ENCODE measurements at regions of chr4 and their contacts with region 1.

Region 1: DNA sequence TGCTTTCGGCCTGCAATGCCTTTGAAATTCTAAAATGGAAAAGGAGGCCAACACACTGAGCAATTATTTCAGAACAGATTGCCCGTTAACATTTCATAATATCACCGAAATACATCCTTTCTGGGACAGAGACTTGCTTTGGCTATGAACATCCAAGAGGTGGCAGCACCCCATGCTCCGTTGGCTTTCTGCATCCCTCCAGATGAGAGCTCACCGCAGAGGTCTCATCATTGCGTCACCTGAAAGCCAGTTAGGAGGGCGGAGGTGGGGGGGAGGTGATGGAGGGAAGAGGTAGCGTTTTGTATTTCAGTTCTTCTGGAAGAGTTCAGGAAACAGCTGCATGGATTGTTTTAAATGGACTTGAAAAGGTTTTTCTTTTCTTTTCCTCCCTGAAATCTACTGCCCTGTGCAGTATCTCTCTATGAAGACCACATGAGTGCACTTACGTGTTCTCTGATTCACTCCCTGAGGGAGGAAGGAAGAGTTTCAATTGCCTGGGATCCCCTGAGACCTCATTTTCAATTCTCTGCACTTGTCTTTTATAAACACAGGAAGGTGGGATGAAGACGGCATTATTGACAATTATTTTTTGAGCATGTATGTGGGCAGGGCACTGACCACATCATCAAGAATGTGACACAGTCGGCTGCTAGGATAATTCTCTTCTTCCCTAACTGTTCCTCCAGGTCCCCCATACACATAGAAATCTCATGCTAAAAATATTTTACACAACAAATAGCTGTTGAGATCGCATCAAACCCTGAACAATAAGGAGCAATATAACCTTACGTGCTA is 166.9 kb upstream of the PGRMC2 start:
- DNase-seq: peak; percentile 51
- ATAC-seq: peak; percentile 95
- H3K4me3 ChIP-seq: no peak overlapping the region
- H3K27ac ChIP-seq: no peak overlapping the region
- H3K4me1 ChIP-seq: 0 out of 2 replicates have a peak, but pooled peaks cover 3% of the 10 kb centered on the region
- H3K27me3 ChIP-seq: no peaks in the 10 kb centered on the region
- CTCF ChIP-seq: peak; percentile 84 to 90 (median 86)
- EP300 ChIP-seq: no peak
- POLR2A ChIP-seq: no peak
- RAD21 ChIP-seq: peak; percentile 93

Region 2: DNA sequence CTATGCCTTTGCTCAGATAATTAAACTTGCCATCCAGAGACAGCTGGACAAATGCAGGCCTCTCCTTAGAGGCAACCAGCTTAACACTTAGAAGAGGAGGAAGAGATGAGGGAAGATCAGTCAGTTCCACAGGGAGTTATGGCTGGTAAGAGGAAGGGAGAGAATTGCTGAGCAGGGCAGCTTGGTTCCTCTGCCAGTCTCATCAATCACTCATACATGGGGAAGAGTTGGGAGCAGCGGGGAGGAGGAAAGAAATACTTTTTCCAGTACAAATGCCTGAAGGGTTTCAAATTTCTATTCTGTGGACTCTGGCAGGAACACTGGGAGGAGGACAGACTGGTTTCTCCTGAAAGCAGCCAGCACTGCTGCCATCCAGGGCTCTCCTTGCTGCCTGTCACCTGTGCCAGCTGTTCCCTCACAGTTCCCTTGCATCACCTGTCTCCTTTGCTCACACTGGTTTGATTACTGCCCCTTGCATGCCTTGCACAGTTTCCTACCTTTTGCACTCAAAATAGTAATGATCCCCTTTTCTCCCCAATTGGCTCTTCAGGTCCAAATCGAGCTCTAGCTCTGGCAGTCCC is 226.4 kb before region 1 on chr4:
- CTCF ChIA-PET with region 1: no interaction called
- POLR2A ChIA-PET with region 1: no interaction called
- RAD21 ChIA-PET with region 1: no interaction called
- SMC1A ChIA-PET with region 1: no interaction called
- in situ Hi-C with region 1: no loop called
- intact Hi-C with region 1: no loop called
- DNase-seq: no peak
- ATAC-seq: no peak
- H3K4me3 ChIP-seq: no peak overlapping the region
- H3K27ac ChIP-seq: no peak overlapping the region
- H3K4me1 ChIP-seq: no peaks in the 10 kb centered on the region
- H3K27me3 ChIP-seq: no peaks in the 10 kb centered on the region
- CTCF ChIP-seq: no peak
- EP300 ChIP-seq: no peak
- POLR2A ChIP-seq: no peak
- RAD21 ChIP-seq: no peak

Region 3: GRCh38 chr4:128427832-128428366 is 26.6 kb before region 1 on chr4:
- CTCF ChIA-PET with region 1: interaction called, 10 read pairs
- POLR2A ChIA-PET with region 1: no interaction called
- RAD21 ChIA-PET with region 1: no interaction called
- SMC1A ChIA-PET with region 1: interaction called, 4 read pairs
- in situ Hi-C with region 1: no loop called
- intact Hi-C with region 1: no loop called
- DNase-seq: no peak
- ATAC-seq: peak; percentile 55; the same call in 2 of the 3 replicates
- H3K4me3 ChIP-seq: no peak overlapping the region
- H3K27ac ChIP-seq: no peak overlapping the region
- H3K4me1 ChIP-seq: no peaks in the 10 kb centered on the region
- H3K27me3 ChIP-seq: no peaks in the 10 kb centered on the region; a peak in 1 of 4 replicates
- CTCF ChIP-seq: peak in 1 of 3 experiments; percentile 8; a peak in 1 of 6 replicates
- EP300 ChIP-seq: no peak
- POLR2A ChIP-seq: no peak
- RAD21 ChIP-seq: no peak

Region 4: GRCh38 chr4:128517739-128518510 is 63.4 kb after region 1 on chr4:
- CTCF ChIA-PET with region 1: interaction called, 9 read pairs
- POLR2A ChIA-PET with region 1: interaction called, 5 read pairs
- RAD21 ChIA-PET with region 1: interaction called, 47 read pairs
- SMC1A ChIA-PET with region 1: interaction called, 27 read pairs
- in situ Hi-C with region 1: no loop called
- intact Hi-C with region 1: loop called (anchors 2 kb)
- DNase-seq: peak; percentile 94
- ATAC-seq: peak; percentile 98
- H3K4me3 ChIP-seq: no peak overlapping the region
- H3K27ac ChIP-seq: peak overlapping the region; percentile 66
- H3K4me1 ChIP-seq: peaks cover 23% of the 10 kb centered on the region
- H3K27me3 ChIP-seq: no peaks in the 10 kb centered on the region
- CTCF ChIP-seq: no peak
- EP300 ChIP-seq: peak; percentile 72 to 93; a peak in 3 of 4 replicates
- POLR2A ChIP-seq: no peak
- RAD21 ChIP-seq: no peak

Region 5: GRCh38 chr4:128553686-128554515 is 99.4 kb after region 1 on chr4:
- CTCF ChIA-PET with region 1: interaction called, 43 read pairs
- POLR2A ChIA-PET with region 1: interaction called, 3 read pairs
- RAD21 ChIA-PET with region 1: interaction called, 12 read pairs
- SMC1A ChIA-PET with region 1: interaction called, 34 read pairs
- in situ Hi-C with region 1: no loop called
- intact Hi-C with region 1: no loop called
- DNase-seq: no peak
- ATAC-seq: no peak
- H3K4me3 ChIP-seq: peak overlapping the region; percentile 74
- H3K27ac ChIP-seq: no peak overlapping the region
- H3K4me1 ChIP-seq: peaks cover 9% of the 10 kb centered on the region; the same call in 1 of the 2 replicates
- H3K27me3 ChIP-seq: no peaks in the 10 kb centered on the region
- CTCF ChIP-seq: no peak
- EP300 ChIP-seq: no peak
- POLR2A ChIP-seq: no peak
- RAD21 ChIP-seq: no peak

Region 6: DNA sequence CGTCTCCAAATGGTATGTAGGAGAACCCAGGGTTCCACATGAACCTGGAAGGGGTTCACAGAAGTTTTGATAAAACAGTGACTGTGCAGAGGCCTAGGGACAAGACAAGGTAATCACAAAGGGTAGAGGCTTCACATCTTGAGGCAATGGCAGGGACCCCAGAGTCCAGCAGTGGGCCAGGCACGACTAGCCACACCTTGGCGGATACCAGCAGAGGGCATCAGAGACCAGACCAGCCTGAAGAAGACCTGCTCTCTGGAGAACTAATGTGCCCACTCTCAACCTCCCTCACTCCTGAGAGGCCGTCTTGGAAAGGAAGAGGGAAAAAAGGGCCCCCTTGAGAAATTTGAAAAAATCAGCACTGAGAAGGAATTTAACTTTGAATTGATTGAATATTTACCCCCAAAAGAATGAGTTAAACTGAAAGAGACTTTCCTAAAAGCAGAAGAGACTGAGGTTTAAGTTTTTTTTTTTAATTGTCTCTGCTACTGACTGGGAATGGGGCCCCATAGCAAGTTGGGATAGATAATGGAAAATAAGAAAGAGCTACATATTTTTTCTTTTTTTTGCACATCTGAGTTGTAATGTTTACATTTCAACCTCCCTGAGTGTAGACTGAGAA is 111.2 kb after region 1 on chr4:
- CTCF ChIA-PET with region 1: interaction called, 21 read pairs
- POLR2A ChIA-PET with region 1: no interaction called
- RAD21 ChIA-PET with region 1: interaction called, 7 read pairs
- SMC1A ChIA-PET with region 1: interaction called, 11 read pairs
- in situ Hi-C with region 1: no loop called
- intact Hi-C with region 1: loop called (anchors 5 kb)
- DNase-seq: no peak
- ATAC-seq: peak; percentile 92
- H3K4me3 ChIP-seq: no peak overlapping the region
- H3K27ac ChIP-seq: no peak overlapping the region
- H3K4me1 ChIP-seq: no peaks in the 10 kb centered on the region
- H3K27me3 ChIP-seq: no peaks in the 10 kb centered on the region; a peak in 1 of 4 replicates
- CTCF ChIP-seq: peak; percentile 49 to 71 (median 55)
- EP300 ChIP-seq: no peak
- POLR2A ChIP-seq: no peak
- RAD21 ChIP-seq: peak; percentile 69

Region 7: GRCh38 chr4:128639541-128640270 is 185.2 kb after region 1 on chr4:
- CTCF ChIA-PET with region 1: no interaction called
- POLR2A ChIA-PET with region 1: no interaction called
- RAD21 ChIA-PET with region 1: no interaction called
- SMC1A ChIA-PET with region 1: no interaction called
- in situ Hi-C with region 1: no loop called
- intact Hi-C with region 1: no loop called
- DNase-seq: no peak
- ATAC-seq: no peak
- H3K4me3 ChIP-seq: no peak overlapping the region
- H3K27ac ChIP-seq: no peak overlapping the region
- H3K4me1 ChIP-seq: no peaks in the 10 kb centered on the region
- H3K27me3 ChIP-seq: no peaks in the 10 kb centered on the region
- CTCF ChIP-seq: no peak
- EP300 ChIP-seq: no peak
- POLR2A ChIP-seq: no peak
- RAD21 ChIP-seq: no peak

Region 8: GRCh38 chr4:128675083-128675482 is 220.6 kb after region 1 on chr4:
- CTCF ChIA-PET with region 1: interaction called, 27 read pairs
- POLR2A ChIA-PET with region 1: no interaction called
- RAD21 ChIA-PET with region 1: interaction called, 30 read pairs
- SMC1A ChIA-PET with region 1: interaction called, 36 read pairs
- in situ Hi-C with region 1: no loop called
- intact Hi-C with region 1: loop called (anchors 1 kb)
- DNase-seq: peak; percentile 90
- ATAC-seq: peak; percentile 97
- H3K4me3 ChIP-seq: no peak overlapping the region; the same call in 1 of the 2 replicates
- H3K27ac ChIP-seq: peak overlapping the region; percentile 69
- H3K4me1 ChIP-seq: peaks cover 9% of the 10 kb centered on the region
- H3K27me3 ChIP-seq: no peaks in the 10 kb centered on the region
- CTCF ChIP-seq: peak in 1 of 3 experiments; percentile 60; a peak in 3 of 6 replicates
- EP300 ChIP-seq: peak in 1 of 2 experiments; percentile 74; a peak in 2 of 4 replicates
- POLR2A ChIP-seq: no peak
- RAD21 ChIP-seq: peak; percentile 90

Region 9: GRCh38 chr4:128868758-128869157 is 414.3 kb after region 1 on chr4:
- CTCF ChIA-PET with region 1: interaction called, 13 read pairs
- POLR2A ChIA-PET with region 1: no interaction called
- RAD21 ChIA-PET with region 1: no interaction called
- SMC1A ChIA-PET with region 1: no interaction called
- in situ Hi-C with region 1: loop called (anchors 5 kb)
- intact Hi-C with region 1: loop called (anchors 1 kb)
- DNase-seq: no peak
- ATAC-seq: no peak
- H3K4me3 ChIP-seq: no peak overlapping the region
- H3K27ac ChIP-seq: no peak overlapping the region
- H3K4me1 ChIP-seq: no peaks in the 10 kb centered on the region
- H3K27me3 ChIP-seq: no peaks in the 10 kb centered on the region
- CTCF ChIP-seq: no peak
- EP300 ChIP-seq: no peak
- POLR2A ChIP-seq: no peak
- RAD21 ChIP-seq: no peak